ENCODE measurements at regions of chr15 and their contacts with region 1.

Region 1: DNA sequence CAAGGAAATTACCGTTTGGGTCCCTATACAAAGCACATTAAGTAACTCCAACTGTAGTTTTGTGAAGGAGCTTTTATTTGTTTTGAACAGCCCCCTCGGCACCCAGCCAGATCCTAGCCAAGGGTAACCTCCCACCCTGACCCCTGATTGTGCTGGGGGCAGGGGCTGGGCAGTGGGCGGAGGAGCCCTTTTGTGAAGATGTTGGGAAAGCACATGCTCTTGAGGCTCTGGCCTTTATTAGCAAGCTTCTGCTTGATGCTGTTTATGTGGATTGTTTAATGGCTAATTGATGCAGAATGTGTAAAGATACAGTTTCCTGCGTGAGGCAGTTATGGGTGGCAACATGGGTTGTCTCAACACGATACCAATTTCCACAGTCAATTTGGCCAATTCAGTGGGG is 136.5 kb downstream of the MAP2K5 start:
- DNase-seq: no peak
- H3K4me3 ChIP-seq: no peak overlapping the region
- H3K27ac ChIP-seq: no peak overlapping the region
- H3K4me1 ChIP-seq: 0 out of 2 replicates have a peak, but pooled peaks cover 4% of the 10 kb centered on the region
- H3K27me3 ChIP-seq: no peaks in the 10 kb centered on the region
- CTCF ChIP-seq: no peak

Region 2: DNA sequence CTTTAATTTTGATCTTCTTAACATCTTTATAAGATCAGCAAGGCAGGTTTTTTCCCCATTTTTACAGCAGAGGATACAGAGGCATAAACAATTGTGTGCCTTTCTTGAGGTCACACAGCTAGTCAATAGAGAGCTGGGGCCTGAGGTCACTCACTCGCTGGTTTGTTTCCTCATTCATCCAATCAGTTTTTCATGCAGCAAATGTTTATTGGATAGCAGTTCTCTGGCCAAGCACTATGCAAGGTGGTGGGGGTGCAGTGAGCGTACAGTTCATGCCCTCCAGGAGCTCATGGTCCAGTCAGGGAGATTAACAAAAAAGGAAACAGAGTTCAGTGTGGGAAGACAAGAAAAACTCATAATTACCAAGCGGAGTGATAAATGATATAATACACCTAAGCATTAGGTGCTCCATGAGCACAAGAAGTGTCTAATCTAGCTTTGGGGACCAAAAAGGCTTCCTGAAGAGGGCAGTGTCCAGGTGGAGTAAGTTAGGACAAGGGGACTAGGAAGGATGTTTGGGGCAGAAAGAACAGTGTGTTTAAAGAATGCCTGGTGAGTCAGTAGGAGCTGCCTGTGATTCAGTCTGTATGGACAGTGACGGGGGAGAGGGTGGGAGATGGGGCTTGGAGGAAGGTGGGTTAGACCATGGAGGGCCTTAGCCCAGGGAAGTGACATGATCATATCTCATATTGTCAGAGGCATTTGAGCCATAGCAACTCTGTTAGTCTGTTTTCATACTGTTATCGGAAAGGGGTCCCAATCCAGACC is 107.2 kb before region 1 on chr15:
- CTCF ChIA-PET with region 1: interaction called, 11 read pairs
- POLR2A ChIA-PET with region 1: no interaction called
- intact Hi-C with region 1: no loop called
- DNase-seq: no peak
- H3K4me3 ChIP-seq: no peak overlapping the region
- H3K27ac ChIP-seq: no peak overlapping the region
- H3K4me1 ChIP-seq: no peaks in the 10 kb centered on the region
- H3K27me3 ChIP-seq: no peaks in the 10 kb centered on the region
- CTCF ChIP-seq: no peak